H1 (cell line): ENCODE measurements at regions of chr20 and their contacts with region 1.

Region 1: DNA sequence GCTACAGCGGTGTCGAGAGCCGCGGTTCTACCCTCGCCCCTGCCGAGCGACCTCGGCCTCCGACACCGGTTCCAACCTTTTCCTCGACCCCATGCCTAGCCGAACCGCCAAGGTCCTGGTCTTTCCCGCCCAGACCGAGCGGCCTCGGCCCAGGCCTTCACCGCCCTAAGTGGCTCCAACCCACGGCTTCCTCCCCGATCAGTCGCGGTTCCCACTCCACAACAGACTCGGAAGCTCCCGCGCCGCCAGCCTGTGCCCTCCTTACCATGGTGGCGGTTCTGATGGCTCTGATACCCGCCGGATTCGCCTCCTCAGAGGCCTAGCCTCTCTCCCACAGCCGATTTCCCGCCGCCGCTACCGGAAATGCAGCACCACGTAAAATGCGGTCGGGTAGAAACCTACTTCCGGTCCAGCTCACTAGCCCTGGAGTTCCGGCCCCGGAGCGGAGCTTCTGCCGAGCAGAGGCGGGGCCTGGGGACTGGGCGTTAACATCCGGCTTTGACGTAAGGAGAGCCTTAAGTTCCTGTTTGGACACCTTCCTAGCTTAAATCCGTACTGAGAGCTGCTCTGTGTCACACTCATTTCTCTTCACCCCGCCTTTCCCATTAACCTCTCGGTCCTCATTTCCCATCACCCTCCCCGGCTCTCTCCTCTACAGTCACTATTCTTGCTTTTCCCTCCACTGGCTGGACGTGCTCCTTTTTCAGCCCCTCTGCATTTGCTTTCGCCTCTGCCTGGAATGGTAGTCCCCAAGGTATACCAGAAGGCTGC is at the start of gene SNRPB:
- DNase-seq: peak; percentile 93 to 96
- H3K4me3 ChIP-seq: peak within 1 kb of the TSS; percentile 91 to 99 (median 98)
- H3K27ac ChIP-seq: peak within 1 kb of the TSS; percentile 98
- H3K4me1 ChIP-seq: peaks cover 0 to 7% (median 2%) of the 10 kb centered on the region in 4 experiments; a peak in 3 of 7 replicates
- H3K27me3 ChIP-seq: no peaks in the 10 kb centered on the region
- CTCF ChIP-seq: no peak
- EP300 ChIP-seq: peak in 1 of 2 experiments; percentile 62; a peak in 1 of 3 replicates
- POLR2A ChIP-seq: peak; percentile 95 to 99
- RAD21 ChIP-seq: no peak
- total RNA-seq, gene SNRPB: 495 and 507 TPM in 2 replicates

Region 2: DNA sequence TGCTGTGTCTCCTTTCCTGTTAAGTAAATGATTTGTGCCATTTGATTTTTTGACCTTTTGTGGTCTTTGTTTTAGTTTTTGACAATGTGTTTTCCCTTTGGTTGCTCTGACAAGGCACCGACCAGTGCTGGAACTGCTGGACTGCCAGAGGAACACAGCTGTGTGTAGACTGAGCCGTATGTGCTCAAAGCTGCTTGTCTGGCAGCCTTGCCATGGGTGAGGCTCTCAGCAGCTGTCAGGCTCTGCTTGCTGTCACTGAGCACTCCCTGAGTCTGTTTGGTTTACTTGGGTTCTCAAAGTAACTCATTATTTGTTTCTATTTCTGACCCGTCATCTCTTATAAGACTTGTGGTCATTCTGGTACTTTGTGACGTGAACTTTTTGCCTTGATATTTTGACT is 15.1 kb after region 1 on chr20:
- CTCF ChIA-PET with region 1: interaction called, 3 read pairs
- POLR2A ChIA-PET with region 1: interaction called, 14 read pairs
- DNase-seq: no peak
- H3K4me3 ChIP-seq: no peak overlapping the region
- H3K27ac ChIP-seq: no peak overlapping the region
- H3K4me1 ChIP-seq: no peaks in the 10 kb centered on the region; a peak in 1 of 7 replicates
- H3K27me3 ChIP-seq: no peaks in the 10 kb centered on the region
- CTCF ChIP-seq: no peak
- EP300 ChIP-seq: no peak
- POLR2A ChIP-seq: no peak
- RAD21 ChIP-seq: no peak

Region 3: GRCh38 chr20:2508631-2509467 is 38.2 kb after region 1 on chr20 and contains the start of gene ZNF343:
- CTCF ChIA-PET with region 1: interaction called, 3 read pairs
- POLR2A ChIA-PET with region 1: interaction called, 19 read pairs
- DNase-seq: peak; percentile 31 to 77
- H3K4me3 ChIP-seq: peak within 1 kb of the TSS; percentile 66 to 83 (median 80)
- H3K27ac ChIP-seq: peak within 1 kb of the TSS; percentile 63; the same call in 1 of the 2 replicates
- H3K4me1 ChIP-seq: peaks cover 0 to 5% (median 2%) of the 10 kb centered on the region in 4 experiments; a peak in 3 of 7 replicates
- H3K27me3 ChIP-seq: peaks cover 28 to 58% (median 50%) of the 10 kb centered on the region in 4 experiments
- CTCF ChIP-seq: no peak
- EP300 ChIP-seq: no peak
- POLR2A ChIP-seq: no peak
- RAD21 ChIP-seq: no peak
- total RNA-seq, gene ZNF343: 3.7 and 5.0 TPM in 2 replicates

Region 4: GRCh38 chr20:2578475-2579192 is 108.0 kb after region 1 on chr20:
- CTCF ChIA-PET with region 1: no interaction called
- POLR2A ChIA-PET with region 1: no interaction called
- DNase-seq: peak in 1 of 2 experiments; percentile 28
- H3K4me3 ChIP-seq: no peak overlapping the region
- H3K27ac ChIP-seq: no peak overlapping the region
- H3K4me1 ChIP-seq: no peaks in the 10 kb centered on the region; a peak in 1 of 7 replicates
- H3K27me3 ChIP-seq: no peaks in the 10 kb centered on the region
- CTCF ChIP-seq: no peak
- EP300 ChIP-seq: no peak
- POLR2A ChIP-seq: no peak
- RAD21 ChIP-seq: no peak

Region 5: GRCh38 chr20:2658414-2659354 is 188.1 kb after region 1 on chr20:
- CTCF ChIA-PET with region 1: interaction called, 3 read pairs
- POLR2A ChIA-PET with region 1: interaction called, 54 read pairs
- DNase-seq: peak in 1 of 2 experiments; percentile 52
- H3K4me3 ChIP-seq: no peak overlapping the region
- H3K27ac ChIP-seq: no peak overlapping the region
- H3K4me1 ChIP-seq: peaks cover 0 to 9% (median 3%) of the 10 kb centered on the region in 4 experiments; a peak in 6 of 7 replicates
- H3K27me3 ChIP-seq: no peaks in the 10 kb centered on the region
- CTCF ChIP-seq: no peak
- EP300 ChIP-seq: no peak
- POLR2A ChIP-seq: peak; percentile 74 to 81; a peak in 2 of 3 replicates
- RAD21 ChIP-seq: no peak